Vagina (tissue), 2 donors: ENCODE measurements at regions of chr12 and their contacts with region 1.

Region 1: GRCh38 chr12:106309671-106310505 is 7.4 kb downstream of the TCP11L2 start:
- DNase-seq: no peak
- H3K4me3 ChIP-seq: no peak overlapping the region
- H3K27ac ChIP-seq: no peak overlapping the region
- H3K4me1 ChIP-seq: peaks cover 66% of the 10 kb centered on the region
- H3K27me3 ChIP-seq: no peaks in the 10 kb centered on the region
- CTCF ChIP-seq: no peak
- POLR2A ChIP-seq: no peak

Region 2: GRCh38 chr12:106362969-106363368 is 53.1 kb after region 1 on chr12:
- intact Hi-C with region 1: loop called (anchors 2 kb)
- DNase-seq: no peak
- H3K4me3 ChIP-seq: no peak overlapping the region
- H3K27ac ChIP-seq: no peak overlapping the region
- H3K4me1 ChIP-seq: peaks cover 16% of the 10 kb centered on the region
- H3K27me3 ChIP-seq: no peaks in the 10 kb centered on the region
- CTCF ChIP-seq: no peak
- POLR2A ChIP-seq: no peak

Region 3: GRCh38 chr12:106709068-106709511 is 399.2 kb after region 1 on chr12:
- intact Hi-C with region 1: no loop called
- DNase-seq: no peak
- H3K4me3 ChIP-seq: no peak overlapping the region
- H3K27ac ChIP-seq: no peak overlapping the region
- H3K4me1 ChIP-seq: no peaks in the 10 kb centered on the region
- H3K27me3 ChIP-seq: no peaks in the 10 kb centered on the region
- CTCF ChIP-seq: no peak
- POLR2A ChIP-seq: no peak